Right ventricle myocardium inferior (tissue), 1 donor: ENCODE measurements at regions of chr12 and their contacts with region 1.

Region 1: GRCh38 chr12:14629832-14630710 is 62.4 kb upstream of the PLBD1 start:
- DNase-seq: peak; percentile 67
- ATAC-seq: peak; percentile 97

Region 2: GRCh38 chr12:14558473-14558959 is 71.6 kb before region 1 on chr12:
- intact Hi-C with region 1: no loop called
- DNase-seq: no peak
- ATAC-seq: no peak

Region 3: GRCh38 chr12:14664510-14664909 is 34.4 kb after region 1 on chr12:
- intact Hi-C with region 1: loop called (anchors 1 kb)
- DNase-seq: no peak
- ATAC-seq: no peak

Region 4: GRCh38 chr12:14716848-14717444 is 86.9 kb after region 1 on chr12:
- intact Hi-C with region 1: loop called (anchors 5 kb)
- DNase-seq: no peak
- ATAC-seq: no peak